Activated CD4-positive, alpha-beta T cell treated with anti-CD3 and anti-CD28 coated beads for 36 hours (primary cell): ENCODE measurements at regions of chr1 and their contacts with region 1.

Region 1: GRCh38 chr1:196355206-196355786 is 252.9 kb downstream of the KCNT2 start:
- DNase-seq: no peak
- ATAC-seq: no peak
- H3K4me3 Mint-ChIP-seq: no peak overlapping the region
- H3K27ac Mint-ChIP-seq: no peak overlapping the region
- H3K4me1 Mint-ChIP-seq: no peaks in the 10 kb centered on the region
- H3K27me3 Mint-ChIP-seq: no peaks in the 10 kb centered on the region

Region 2: GRCh38 chr1:196372896-196373536 is 17.7 kb after region 1 on chr1:
- CTCF ChIA-PET with region 1: interaction called, 10 read pairs
- POLR2A ChIA-PET with region 1: no interaction called
- intact Hi-C with region 1: no loop called
- DNase-seq: no peak
- ATAC-seq: no peak
- H3K4me3 Mint-ChIP-seq: no peak overlapping the region
- H3K27ac Mint-ChIP-seq: no peak overlapping the region
- H3K4me1 Mint-ChIP-seq: no peaks in the 10 kb centered on the region
- H3K27me3 Mint-ChIP-seq: no peaks in the 10 kb centered on the region